ENCODE measurements at regions of chr2 and their contacts with region 1.

Region 1: GRCh38 chr2:117814417-117815264 is at the start of gene DDX18:
- DNase-seq: peak; percentile 94 to 99 (median 98)
- ATAC-seq: peak; percentile 91 to 94 (median 92)
- H3K4me3 ChIP-seq: peak within 1 kb of the TSS; percentile 77 to 95
- H3K4me3 Mint-ChIP-seq: peak within 1 kb of the TSS; percentile 90 to 94 (median 91)
- H3K27ac ChIP-seq: peak within 1 kb of the TSS; percentile 96
- H3K27ac Mint-ChIP-seq: peak within 1 kb of the TSS; percentile 92 to 97
- H3K4me1 ChIP-seq: peaks cover 11 to 19% of the 10 kb centered on the region in 2 experiments
- H3K4me1 Mint-ChIP-seq: peaks cover 47 to 53% (median 48%) of the 10 kb centered on the region in 3 donors
- H3K27me3 ChIP-seq: no peaks in the 10 kb centered on the region
- H3K27me3 Mint-ChIP-seq: peaks cover 0 to 3% of the 10 kb centered on the region in 2 donors
- total RNA-seq, gene DDX18: 78.2 to 134 (median 88.7) TPM

Region 2: GRCh38 chr2:117019357-117019756 is 795.3 kb before region 1 on chr2:
- CTCF ChIA-PET with region 1: no interaction called
- POLR2A ChIA-PET with region 1: no interaction called
- DNase-seq: no peak
- ATAC-seq: no peak
- H3K4me3 ChIP-seq: no peak overlapping the region
- H3K4me3 Mint-ChIP-seq: no peak overlapping the region
- H3K27ac ChIP-seq: no peak overlapping the region
- H3K27ac Mint-ChIP-seq: no peak overlapping the region
- H3K4me1 ChIP-seq: no peaks in the 10 kb centered on the region
- H3K4me1 Mint-ChIP-seq: no peaks in the 10 kb centered on the region
- H3K27me3 ChIP-seq: no peaks in the 10 kb centered on the region
- H3K27me3 Mint-ChIP-seq: no peaks in the 10 kb centered on the region

Region 3: GRCh38 chr2:117801826-117802225 is 12.8 kb before region 1 on chr2:
- CTCF ChIA-PET with region 1: interaction called in 1 of 2 experiments, 10 read pairs
- POLR2A ChIA-PET with region 1: no interaction called
- DNase-seq: no peak
- ATAC-seq: no peak
- H3K4me3 ChIP-seq: no peak overlapping the region
- H3K4me3 Mint-ChIP-seq: no peak overlapping the region
- H3K27ac ChIP-seq: no peak overlapping the region
- H3K27ac Mint-ChIP-seq: no peak overlapping the region
- H3K4me1 ChIP-seq: no peaks in the 10 kb centered on the region
- H3K4me1 Mint-ChIP-seq: peaks cover 7 to 12% (median 8%) of the 10 kb centered on the region in 3 donors
- H3K27me3 ChIP-seq: peaks cover 0 to 2% of the 10 kb centered on the region in 2 experiments
- H3K27me3 Mint-ChIP-seq: peaks cover 25 to 31% of the 10 kb centered on the region in 2 donors

Region 4: DNA sequence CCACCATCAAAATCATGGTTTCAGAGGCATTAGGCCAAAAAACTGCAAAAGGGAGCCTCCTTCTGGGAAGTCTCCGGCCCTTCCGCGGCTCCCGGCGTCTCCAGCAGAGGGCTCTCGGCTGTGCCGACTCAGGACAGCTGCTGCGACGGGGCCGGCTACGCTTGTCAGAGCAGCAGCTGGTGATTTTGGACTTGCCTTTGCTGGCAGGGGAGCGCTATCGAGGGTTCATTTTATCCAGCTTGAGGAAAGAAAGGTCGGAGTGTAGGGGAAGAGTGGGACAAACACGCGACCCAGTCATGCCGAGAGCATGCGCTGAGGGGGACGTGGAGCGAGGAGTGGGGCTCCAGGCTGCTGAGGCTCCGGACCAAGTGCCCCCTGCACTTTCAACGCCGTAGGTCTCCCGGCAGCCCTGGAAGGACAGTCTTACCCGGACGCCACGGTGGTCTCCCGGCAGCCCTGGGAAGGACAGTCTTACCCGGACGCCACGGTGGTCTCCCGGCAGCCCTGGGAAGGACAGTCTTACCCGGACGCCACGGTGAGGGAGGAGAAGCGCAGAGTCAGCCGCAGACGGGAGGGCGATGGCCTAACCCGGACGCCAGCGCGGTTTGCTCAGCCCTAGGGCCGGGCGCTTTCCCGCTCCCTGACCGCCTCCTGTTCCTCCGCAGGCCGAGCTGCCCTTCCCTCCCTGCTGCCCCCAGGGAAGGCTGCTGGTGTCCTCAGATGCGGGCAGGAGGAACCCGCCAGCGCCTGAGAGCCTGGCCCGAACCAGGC is 21.5 kb after region 1 on chr2:
- CTCF ChIA-PET with region 1: interaction called, 5 to 8 read pairs
- POLR2A ChIA-PET with region 1: interaction called in 1 of 2 experiments, 11 read pairs
- DNase-seq: peak in 30 of 35 experiments; percentile 24 to 65 (median 42)
- ATAC-seq: peak; percentile 71 to 84 (median 76)
- H3K4me3 ChIP-seq: peak overlapping the region; percentile 35 to 42
- H3K4me3 Mint-ChIP-seq: peak overlapping the region; percentile 73 to 83 (median 79)
- H3K27ac ChIP-seq: no peak overlapping the region
- H3K27ac Mint-ChIP-seq: no peak overlapping the region
- H3K4me1 ChIP-seq: peaks cover 0 to 16% of the 10 kb centered on the region in 2 experiments
- H3K4me1 Mint-ChIP-seq: peaks cover 11 to 16% (median 13%) of the 10 kb centered on the region in 3 donors
- H3K27me3 ChIP-seq: peaks cover 0 to 8% of the 10 kb centered on the region in 2 experiments
- H3K27me3 Mint-ChIP-seq: peaks cover 0 to 4% of the 10 kb centered on the region in 2 donors

Region 5: DNA sequence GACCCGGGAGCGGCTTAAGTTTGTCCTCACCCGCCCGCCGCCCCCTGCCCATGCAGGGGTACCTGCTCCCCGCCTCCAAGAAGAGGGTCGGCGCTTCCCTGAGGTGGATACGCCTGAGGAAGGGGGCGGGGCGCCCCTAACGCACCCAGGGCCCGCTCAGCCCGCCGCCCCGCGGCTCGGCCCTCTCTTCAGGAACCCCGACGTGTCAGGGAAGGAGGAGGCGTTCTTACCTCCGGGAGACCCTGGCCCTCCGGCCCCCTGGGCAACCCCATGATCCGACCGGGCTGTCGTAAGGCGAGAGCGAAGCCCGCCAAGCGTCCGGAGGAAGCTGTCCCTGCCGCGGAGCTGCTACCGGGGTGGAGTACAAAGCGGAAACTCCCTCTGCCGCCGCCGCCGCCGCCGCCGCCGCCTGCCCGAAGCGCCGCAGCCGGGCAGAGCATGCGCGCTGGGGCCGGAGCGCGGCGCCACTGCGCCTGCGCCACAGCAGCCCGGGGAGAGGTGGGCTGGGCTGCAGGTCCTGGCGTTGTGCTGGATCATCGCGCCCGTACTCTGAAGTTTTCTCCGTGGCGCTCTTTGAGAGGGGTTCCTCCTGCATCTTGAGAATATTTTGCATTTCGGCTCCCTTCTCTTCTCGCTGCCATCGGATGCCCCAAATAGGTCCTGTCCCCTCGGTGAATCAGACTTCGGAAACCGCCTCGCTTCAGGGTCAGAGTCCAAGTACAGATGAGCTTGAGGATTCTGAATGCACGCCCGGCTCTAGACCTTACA is 199.3 kb after region 1 on chr2 and contains the start of gene CCDC93:
- CTCF ChIA-PET with region 1: interaction called in 1 of 2 experiments, 16 read pairs
- POLR2A ChIA-PET with region 1: interaction called, 3 to 5 read pairs
- DNase-seq: peak; percentile 69 to 95 (median 84)
- ATAC-seq: peak; percentile 89 to 90 (median 89)
- H3K4me3 ChIP-seq: peak within 1 kb of the TSS; percentile 86 to 99
- H3K4me3 Mint-ChIP-seq: peak within 1 kb of the TSS; percentile 90 to 94 (median 91)
- H3K27ac ChIP-seq: peak within 1 kb of the TSS; percentile 84
- H3K27ac Mint-ChIP-seq: peak within 1 kb of the TSS; percentile 84 to 92
- H3K4me1 ChIP-seq: peaks cover 11 to 23% of the 10 kb centered on the region in 2 experiments
- H3K4me1 Mint-ChIP-seq: peaks cover 46 to 49% (median 48%) of the 10 kb centered on the region in 3 donors
- H3K27me3 ChIP-seq: no peaks in the 10 kb centered on the region
- H3K27me3 Mint-ChIP-seq: peaks cover 2 to 5% of the 10 kb centered on the region in 2 donors
- total RNA-seq, gene CCDC93: 47.8 to 55.3 (median 50.5) TPM

Region 6: DNA sequence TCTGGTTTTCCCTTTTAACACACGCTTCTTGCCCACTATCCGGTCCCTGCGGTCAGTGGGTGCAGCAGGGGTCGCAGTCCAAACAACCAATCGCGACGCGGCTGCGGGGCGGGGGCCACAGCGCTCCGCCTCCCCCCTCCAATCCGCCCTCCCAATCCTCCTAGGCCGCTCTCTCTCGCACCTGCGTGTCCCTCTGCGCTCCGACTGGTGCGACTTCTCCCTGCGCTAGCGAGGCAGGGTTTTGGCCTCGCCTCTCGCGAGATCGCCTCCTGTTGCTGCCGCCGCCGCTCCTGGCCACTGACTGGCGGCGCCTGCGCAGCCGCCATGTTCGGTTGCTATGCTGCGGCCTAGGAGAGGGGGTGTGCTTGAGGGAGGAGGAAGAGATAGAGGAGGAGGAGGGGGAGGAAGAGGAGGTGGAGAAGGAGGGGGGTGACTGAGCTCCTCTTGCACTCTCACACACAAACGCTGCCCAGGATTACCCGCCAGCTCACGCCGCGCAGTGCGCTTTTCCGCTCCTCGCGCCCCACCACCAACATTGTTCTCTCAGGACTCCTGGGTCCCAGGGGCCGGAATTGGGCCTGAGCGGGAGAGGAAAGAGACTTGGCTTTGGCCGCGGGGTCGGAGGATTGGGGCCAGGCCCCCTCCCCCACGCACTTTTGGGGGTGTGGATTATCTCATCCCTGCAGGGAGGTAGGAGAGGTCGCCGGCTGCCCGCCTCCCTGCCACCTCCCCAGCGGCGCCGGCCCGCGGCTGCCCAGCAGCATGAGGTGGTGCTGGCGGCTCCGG is 1945.0 kb after region 1 on chr2 and contains the start of gene PTPN4:
- CTCF ChIA-PET with region 1: interaction called in 1 of 2 experiments, 11 read pairs
- POLR2A ChIA-PET with region 1: no interaction called
- DNase-seq: peak; percentile 86 to 99 (median 96)
- ATAC-seq: peak; percentile 89 to 92 (median 90)
- H3K4me3 ChIP-seq: peak within 1 kb of the TSS; percentile 95 to 98
- H3K4me3 Mint-ChIP-seq: peak within 1 kb of the TSS; percentile 83 to 93 (median 93)
- H3K27ac ChIP-seq: peak within 1 kb of the TSS; percentile 89
- H3K27ac Mint-ChIP-seq: peak within 1 kb of the TSS; percentile 82 to 84
- H3K4me1 ChIP-seq: peaks cover 7 to 19% of the 10 kb centered on the region in 2 experiments
- H3K4me1 Mint-ChIP-seq: peaks cover 42 to 45% (median 45%) of the 10 kb centered on the region in 3 donors
- H3K27me3 ChIP-seq: no peaks in the 10 kb centered on the region
- H3K27me3 Mint-ChIP-seq: no peaks in the 10 kb centered on the region
- total RNA-seq, gene PTPN4: 105 to 134 (median 126) TPM

Measured in T-cell (primary cell).